AG04450 (cell line): ENCODE measurements at regions of chr6 and their contacts with region 1.

Region 1: GRCh38 chr6:53746442-53747103 is 48.2 kb upstream of the LRRC1 start:
- DNase-seq: no peak
- H3K4me3 ChIP-seq: no peak overlapping the region
- H3K27ac ChIP-seq: no peak overlapping the region
- H3K27me3 ChIP-seq: no peaks in the 10 kb centered on the region
- CTCF ChIP-seq: no peak

Region 2: GRCh38 chr6:53679446-53679933 is 67.1 kb before region 1 on chr6:
- CTCF ChIA-PET with region 1: no interaction called
- POLR2A ChIA-PET with region 1: no interaction called
- DNase-seq: no peak
- H3K4me3 ChIP-seq: no peak overlapping the region
- H3K27ac ChIP-seq: no peak overlapping the region
- H3K27me3 ChIP-seq: no peaks in the 10 kb centered on the region
- CTCF ChIP-seq: peak; percentile 58

Region 3: GRCh38 chr6:53734473-53735299 is 11.9 kb before region 1 on chr6:
- CTCF ChIA-PET with region 1: interaction called, 27 read pairs
- POLR2A ChIA-PET with region 1: no interaction called
- DNase-seq: peak; percentile 30
- H3K4me3 ChIP-seq: no peak overlapping the region
- H3K27ac ChIP-seq: peak overlapping the region; percentile 54
- H3K27me3 ChIP-seq: no peaks in the 10 kb centered on the region
- CTCF ChIP-seq: peak; percentile 46